Tibial artery (tissue), 4 donors: ENCODE measurements at regions of chr17 and their contacts with region 1.

Region 1: DNA sequence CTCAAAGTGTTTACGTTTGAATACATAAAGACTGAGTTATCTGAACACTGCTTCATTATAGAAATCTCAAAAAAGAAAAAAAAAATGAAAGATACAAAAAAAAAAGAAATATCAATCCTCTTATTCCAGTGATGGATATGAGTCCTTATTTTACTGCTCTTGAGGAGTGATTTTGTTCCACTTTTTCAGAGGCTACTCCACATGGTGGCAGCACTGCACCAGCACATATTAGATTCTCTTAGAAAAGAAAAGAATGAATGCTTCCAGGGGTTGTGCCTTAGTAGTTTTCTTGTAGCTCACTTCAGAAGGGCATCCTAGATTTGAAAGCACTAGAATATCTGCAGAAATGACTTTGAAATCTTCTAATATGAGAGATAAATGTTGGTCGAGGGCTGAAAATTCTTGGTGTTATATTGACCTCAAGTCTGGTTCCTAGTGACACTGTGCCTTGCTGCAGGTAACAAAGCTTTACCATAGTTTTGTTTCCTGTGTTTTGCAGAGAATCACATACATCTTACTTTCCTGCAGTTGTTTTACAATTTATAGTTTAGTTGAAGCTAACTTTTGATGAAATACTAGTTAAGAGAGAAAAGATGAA is 25.9 kb downstream of the AP2B1 start:
- DNase-seq: peak in 1 of 2 donors; percentile 50
- H3K4me3 ChIP-seq: no peak overlapping the region
- H3K27ac ChIP-seq: no peak overlapping the region
- H3K4me1 ChIP-seq: no peaks in the 10 kb centered on the region
- H3K27me3 ChIP-seq: no peaks in the 10 kb centered on the region
- CTCF ChIP-seq: peak; percentile 41 to 53

Region 2: DNA sequence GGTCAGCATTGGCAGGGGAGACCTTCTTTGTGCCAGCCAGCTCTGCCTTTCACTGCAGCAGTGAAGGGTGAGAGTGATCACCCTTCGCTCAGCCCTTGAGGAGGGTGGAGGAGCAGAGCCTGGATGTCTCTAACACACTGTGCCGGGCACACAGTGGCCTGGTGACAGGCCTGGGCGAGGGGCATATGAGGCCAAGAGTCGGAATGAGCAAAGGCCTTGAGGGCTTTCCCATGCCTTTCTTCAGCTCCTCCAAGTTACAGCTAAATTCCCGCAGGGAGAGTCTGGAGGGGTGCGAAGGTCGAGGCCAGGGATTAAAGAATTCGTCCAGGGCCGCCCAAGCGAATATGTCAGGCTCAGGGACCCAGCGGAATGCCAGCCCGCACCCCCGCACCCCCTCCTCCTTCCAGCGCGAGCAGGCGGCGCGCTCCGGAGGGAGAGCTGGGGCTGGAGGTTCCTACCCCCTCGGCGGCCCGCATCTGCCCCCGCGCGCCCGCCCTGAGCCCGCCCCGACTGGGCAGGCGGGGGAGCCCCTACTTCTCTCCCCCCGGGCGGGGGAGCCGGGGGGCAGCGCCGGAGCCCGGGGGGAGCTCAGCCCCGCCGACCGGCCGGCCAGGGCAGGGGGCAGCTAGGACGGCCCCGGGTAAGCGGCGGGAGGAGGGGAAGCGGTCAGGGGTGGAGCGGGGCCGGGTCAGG is 118.4 kb after region 1 on chr17 and contains the start of gene RASL10B:
- intact Hi-C with region 1: loop called (anchors 5 kb)
- DNase-seq: peak in 1 of 2 donors; percentile 74
- H3K4me3 ChIP-seq: peak within 1 kb of the TSS; percentile 64 to 78
- H3K27ac ChIP-seq: peak within 1 kb of the TSS; percentile 22 to 68
- H3K4me1 ChIP-seq: peaks cover 0 to 36% (median 24%) of the 10 kb centered on the region in 4 donors
- H3K27me3 ChIP-seq: no peaks in the 10 kb centered on the region
- CTCF ChIP-seq: no peak